CD8-positive, alpha-beta T cell (primary cell): ENCODE measurements at regions of chr1 and their contacts with region 1.

Region 1: DNA sequence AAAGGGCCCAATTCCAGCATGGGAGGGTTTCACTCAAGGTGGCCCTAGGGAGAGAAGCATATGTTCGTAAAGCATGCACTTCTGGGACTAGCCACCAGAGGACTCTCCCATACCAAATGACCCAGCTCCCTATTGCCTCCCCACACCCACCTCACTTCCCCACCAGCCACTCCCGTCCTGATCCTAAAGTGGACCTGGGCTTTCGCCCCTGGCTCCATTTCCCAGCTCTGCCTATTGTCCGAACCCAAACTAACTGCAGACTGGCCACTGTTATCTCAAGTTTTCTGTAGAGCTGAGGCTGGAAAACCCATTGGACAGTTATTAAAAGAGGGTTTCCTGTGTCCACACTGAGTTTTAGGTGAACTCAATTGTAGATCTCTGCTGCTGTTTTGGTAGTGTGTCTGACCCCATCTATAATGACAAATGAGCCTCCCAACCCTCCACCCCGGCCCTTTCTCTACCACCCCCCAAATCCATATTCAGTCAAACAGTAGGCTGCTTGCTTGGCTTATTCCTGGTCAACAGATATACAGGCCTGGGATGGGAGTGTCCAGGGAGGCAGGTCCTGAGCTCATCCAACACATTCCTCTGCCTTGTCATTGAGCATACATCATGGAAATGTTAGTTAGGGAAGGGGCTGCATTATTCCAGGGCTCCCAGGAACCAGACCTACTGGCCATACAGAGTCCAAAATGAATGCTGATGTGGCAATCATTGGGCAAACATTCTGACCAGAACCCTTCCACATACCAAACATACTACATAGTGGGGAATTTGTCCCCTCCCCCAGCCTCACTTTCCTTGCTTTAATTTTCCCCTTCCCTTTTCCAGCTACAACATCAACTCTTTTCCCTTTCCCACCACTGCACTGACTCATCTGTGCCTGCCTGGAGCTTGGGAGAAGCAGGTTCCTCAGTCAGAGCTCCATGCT is 59.2 kb downstream of the ABCA4 start:
- DNase-seq: peak in 4 of 9 experiments; percentile 21 to 55 (median 29)
- ATAC-seq: no peak
- H3K4me3 ChIP-seq: no peak overlapping the region
- H3K4me3 Mint-ChIP-seq: no peak overlapping the region
- H3K27ac ChIP-seq: no peak overlapping the region
- H3K27ac Mint-ChIP-seq: no peak overlapping the region
- H3K4me1 ChIP-seq: no peaks in the 10 kb centered on the region
- H3K4me1 Mint-ChIP-seq: no peaks in the 10 kb centered on the region
- H3K27me3 ChIP-seq: peaks cover 0 to 2% of the 10 kb centered on the region in 2 experiments
- H3K27me3 Mint-ChIP-seq: peaks cover 12% of the 10 kb centered on the region
- CTCF ChIP-seq: peak; percentile 50

Region 2: GRCh38 chr1:93502561-93502960 is 559.2 kb before region 1 on chr1:
- CTCF ChIA-PET with region 1: no interaction called
- POLR2A ChIA-PET with region 1: no interaction called
- intact Hi-C with region 1: no loop called
- DNase-seq: no peak
- ATAC-seq: no peak
- H3K4me3 ChIP-seq: no peak overlapping the region
- H3K4me3 Mint-ChIP-seq: no peak overlapping the region
- H3K27ac ChIP-seq: no peak overlapping the region
- H3K27ac Mint-ChIP-seq: no peak overlapping the region
- H3K4me1 ChIP-seq: no peaks in the 10 kb centered on the region
- H3K4me1 Mint-ChIP-seq: no peaks in the 10 kb centered on the region
- H3K27me3 ChIP-seq: peaks cover 0 to 1% of the 10 kb centered on the region in 2 experiments
- H3K27me3 Mint-ChIP-seq: peaks cover 8% of the 10 kb centered on the region
- CTCF ChIP-seq: no peak

Region 3: GRCh38 chr1:94125551-94126514 is 64.1 kb after region 1 on chr1:
- CTCF ChIA-PET with region 1: no interaction called
- POLR2A ChIA-PET with region 1: no interaction called
- intact Hi-C with region 1: no loop called
- DNase-seq: no peak
- ATAC-seq: no peak
- H3K4me3 ChIP-seq: no peak overlapping the region
- H3K4me3 Mint-ChIP-seq: no peak overlapping the region
- H3K27ac ChIP-seq: no peak overlapping the region
- H3K27ac Mint-ChIP-seq: no peak overlapping the region
- H3K4me1 ChIP-seq: no peaks in the 10 kb centered on the region
- H3K4me1 Mint-ChIP-seq: no peaks in the 10 kb centered on the region
- H3K27me3 ChIP-seq: no peaks in the 10 kb centered on the region
- H3K27me3 Mint-ChIP-seq: peaks cover 2% of the 10 kb centered on the region
- CTCF ChIP-seq: no peak

Region 4: DNA sequence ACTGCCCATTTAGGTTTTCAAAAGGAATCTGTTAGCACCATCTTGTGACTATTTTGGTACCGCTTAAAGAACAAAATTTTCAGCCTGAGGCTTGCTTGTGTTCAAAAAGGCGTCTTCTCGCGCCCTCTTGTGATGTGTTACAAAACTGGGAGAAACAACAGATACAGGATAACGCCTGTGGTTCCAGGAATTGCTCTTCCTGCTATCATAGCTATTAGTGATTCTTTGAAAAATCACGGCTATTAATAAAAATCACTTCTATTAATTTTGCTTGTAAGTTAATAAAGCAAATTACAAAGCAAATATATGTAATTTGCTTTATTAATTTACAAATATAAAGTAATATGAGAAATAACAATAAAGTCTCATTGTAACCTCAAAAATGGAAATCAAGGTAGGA is 274.2 kb after region 1 on chr1:
- CTCF ChIA-PET with region 1: interaction called, 5 read pairs
- POLR2A ChIA-PET with region 1: no interaction called
- intact Hi-C with region 1: loop called (anchors 1 to 5 kb)
- DNase-seq: peak in 3 of 9 experiments; percentile 6 to 52 (median 26)
- ATAC-seq: no peak
- H3K4me3 ChIP-seq: no peak overlapping the region
- H3K4me3 Mint-ChIP-seq: no peak overlapping the region
- H3K27ac ChIP-seq: no peak overlapping the region
- H3K27ac Mint-ChIP-seq: no peak overlapping the region
- H3K4me1 ChIP-seq: no peaks in the 10 kb centered on the region
- H3K4me1 Mint-ChIP-seq: no peaks in the 10 kb centered on the region
- H3K27me3 ChIP-seq: no peaks in the 10 kb centered on the region
- H3K27me3 Mint-ChIP-seq: peaks cover 3% of the 10 kb centered on the region
- CTCF ChIP-seq: peak; percentile 43